K562 (cell line): ENCODE measurements at regions of chr1 and their contacts with region 1.

Region 1: GRCh38 chr1:174999216-174999925 is 376 bp upstream of the CACYBP start:
- DNase-seq: peak; percentile 95 to 99 (median 96)
- ATAC-seq: peak; percentile 77
- H3K4me3 ChIP-seq: peak overlapping the region; percentile 90
- H3K27ac ChIP-seq: peak overlapping the region; percentile 99
- H3K4me1 ChIP-seq: peaks cover 13 to 31% of the 10 kb centered on the region in 2 experiments; a peak in 4 of 5 replicates
- H3K27me3 ChIP-seq: no peaks in the 10 kb centered on the region
- CTCF ChIP-seq: 0 out of 6 replicates have a peak, but pooled peaks of 1 of the 3 experiments have one; percentile 15
- EP300 ChIP-seq: peak; percentile 71
- POLR2A ChIP-seq: peak; percentile 99
- RAD21 ChIP-seq: no peak

Region 2: DNA sequence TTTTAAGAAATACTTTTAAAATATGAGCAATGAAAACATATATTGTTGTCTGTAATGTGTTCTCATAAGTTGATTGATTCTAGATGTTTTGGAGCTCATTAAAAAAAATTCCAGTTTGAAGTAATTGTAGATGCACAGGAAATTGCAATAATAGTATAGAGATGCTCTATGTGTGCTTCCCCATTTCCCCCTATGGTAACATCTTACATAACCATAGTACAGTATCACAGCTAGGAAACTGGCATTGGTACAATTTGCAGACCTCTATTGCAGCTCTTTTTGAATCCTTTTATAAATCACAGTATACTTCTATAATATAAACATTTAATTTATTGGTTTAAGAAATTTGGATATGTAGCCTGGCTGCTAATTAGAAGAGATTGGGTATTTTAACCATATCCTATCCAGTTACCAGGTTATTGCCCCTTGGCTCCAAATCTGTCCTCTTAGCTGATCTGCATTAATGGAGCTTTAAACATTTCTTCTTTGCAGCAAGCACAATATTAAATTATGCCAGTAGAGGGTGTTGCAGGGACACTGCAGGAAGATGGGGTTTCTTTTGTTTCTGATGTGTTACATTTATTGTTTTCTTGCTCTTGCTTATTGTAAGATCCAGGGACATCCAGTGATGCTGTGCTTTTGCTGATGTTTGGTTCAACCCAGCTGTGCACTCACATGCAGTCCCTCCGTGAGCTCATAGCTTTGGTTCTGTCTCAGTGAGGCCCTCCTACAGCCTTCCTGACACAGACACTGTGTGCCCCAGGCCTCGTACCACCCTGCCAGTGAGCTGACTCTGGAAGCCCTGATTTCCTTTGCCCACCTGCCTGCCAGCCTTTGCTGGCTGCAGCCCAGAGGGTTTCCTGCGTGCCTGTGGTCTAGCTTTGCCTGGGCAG is 736.8 kb before region 1 on chr1:
- CTCF ChIA-PET with region 1: no interaction called
- POLR2A ChIA-PET with region 1: interaction called, 4 read pairs
- in situ Hi-C with region 1: loop called (anchors 25 kb)
- intact Hi-C with region 1: loop called (anchors 5 kb)
- DNase-seq: peak; percentile 37 to 50 (median 46)
- ATAC-seq: peak; percentile 84
- H3K4me3 ChIP-seq: no peak overlapping the region
- H3K27ac ChIP-seq: no peak overlapping the region
- H3K4me1 ChIP-seq: peaks cover 0 to 7% of the 10 kb centered on the region in 2 experiments; a peak in 2 of 5 replicates
- H3K27me3 ChIP-seq: no peaks in the 10 kb centered on the region
- CTCF ChIP-seq: peak; percentile 73 to 94 (median 77)
- EP300 ChIP-seq: no peak
- POLR2A ChIP-seq: no peak
- RAD21 ChIP-seq: peak; percentile 78 to 89

Region 3: GRCh38 chr1:174710868-174711845 is 288.2 kb before region 1 on chr1:
- CTCF ChIA-PET with region 1: no interaction called
- POLR2A ChIA-PET with region 1: no interaction called
- in situ Hi-C with region 1: no loop called
- intact Hi-C with region 1: no loop called
- DNase-seq: no peak
- ATAC-seq: no peak
- H3K4me3 ChIP-seq: no peak overlapping the region
- H3K27ac ChIP-seq: no peak overlapping the region
- H3K4me1 ChIP-seq: peaks cover 0 to 6% of the 10 kb centered on the region in 2 experiments; a peak in 1 of 5 replicates
- H3K27me3 ChIP-seq: no peaks in the 10 kb centered on the region
- CTCF ChIP-seq: no peak
- EP300 ChIP-seq: no peak
- POLR2A ChIP-seq: no peak
- RAD21 ChIP-seq: no peak

Region 4: DNA sequence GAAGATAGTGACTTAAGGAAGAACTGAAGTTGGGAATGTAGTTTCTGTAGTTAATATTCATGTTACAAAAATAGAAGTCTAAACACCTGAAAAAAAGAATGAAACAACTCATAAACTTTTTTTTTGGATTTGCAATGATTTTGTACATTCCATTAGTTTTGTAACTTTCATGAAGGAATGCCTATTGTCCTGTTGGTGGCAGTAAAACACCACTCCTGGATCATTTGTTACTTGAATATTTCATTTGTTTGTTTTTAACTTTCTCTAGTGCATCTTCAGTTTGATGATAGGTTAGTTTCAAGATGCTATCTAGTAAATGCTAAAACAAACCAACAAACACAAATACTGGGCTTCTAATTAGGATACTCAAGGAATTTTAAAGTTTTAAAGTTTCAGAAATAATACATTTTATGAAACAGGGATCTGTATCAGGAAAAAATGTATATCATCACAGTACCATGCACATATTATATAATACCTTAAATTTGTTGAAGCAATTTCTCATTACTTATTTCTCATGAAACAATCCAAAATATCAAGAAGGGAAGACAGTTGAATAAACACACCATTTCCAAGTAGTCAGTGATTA is 229.3 kb before region 1 on chr1:
- CTCF ChIA-PET with region 1: interaction called, 38 read pairs
- POLR2A ChIA-PET with region 1: interaction called, 5 read pairs
- in situ Hi-C with region 1: loop called (anchors 5 kb)
- intact Hi-C with region 1: loop called (anchors 1 kb)
- DNase-seq: peak; percentile 28 to 73 (median 38)
- ATAC-seq: peak; percentile 80
- H3K4me3 ChIP-seq: no peak overlapping the region
- H3K27ac ChIP-seq: no peak overlapping the region
- H3K4me1 ChIP-seq: peaks cover 0 to 10% of the 10 kb centered on the region in 2 experiments; a peak in 2 of 5 replicates
- H3K27me3 ChIP-seq: no peaks in the 10 kb centered on the region
- CTCF ChIP-seq: peak; percentile 59 to 93 (median 63); a peak in 4 of 6 replicates
- EP300 ChIP-seq: no peak
- POLR2A ChIP-seq: no peak
- RAD21 ChIP-seq: peak; percentile 93 to 95

Region 5: GRCh38 chr1:174883409-174883808 is 116.0 kb before region 1 on chr1:
- CTCF ChIA-PET with region 1: no interaction called
- POLR2A ChIA-PET with region 1: interaction called, 11 read pairs
- in situ Hi-C with region 1: no loop called
- intact Hi-C with region 1: loop called (anchors 1 kb)
- DNase-seq: peak in 2 of 4 experiments; percentile 32 to 52
- ATAC-seq: peak; percentile 81
- H3K4me3 ChIP-seq: no peak overlapping the region
- H3K27ac ChIP-seq: no peak overlapping the region
- H3K4me1 ChIP-seq: peaks cover 6 to 13% of the 10 kb centered on the region in 2 experiments; a peak in 3 of 5 replicates
- H3K27me3 ChIP-seq: no peaks in the 10 kb centered on the region
- CTCF ChIP-seq: peak; percentile 34 to 66 (median 36); a peak in 3 of 6 replicates
- EP300 ChIP-seq: no peak
- POLR2A ChIP-seq: no peak
- RAD21 ChIP-seq: peak; percentile 63 to 75

Region 6: DNA sequence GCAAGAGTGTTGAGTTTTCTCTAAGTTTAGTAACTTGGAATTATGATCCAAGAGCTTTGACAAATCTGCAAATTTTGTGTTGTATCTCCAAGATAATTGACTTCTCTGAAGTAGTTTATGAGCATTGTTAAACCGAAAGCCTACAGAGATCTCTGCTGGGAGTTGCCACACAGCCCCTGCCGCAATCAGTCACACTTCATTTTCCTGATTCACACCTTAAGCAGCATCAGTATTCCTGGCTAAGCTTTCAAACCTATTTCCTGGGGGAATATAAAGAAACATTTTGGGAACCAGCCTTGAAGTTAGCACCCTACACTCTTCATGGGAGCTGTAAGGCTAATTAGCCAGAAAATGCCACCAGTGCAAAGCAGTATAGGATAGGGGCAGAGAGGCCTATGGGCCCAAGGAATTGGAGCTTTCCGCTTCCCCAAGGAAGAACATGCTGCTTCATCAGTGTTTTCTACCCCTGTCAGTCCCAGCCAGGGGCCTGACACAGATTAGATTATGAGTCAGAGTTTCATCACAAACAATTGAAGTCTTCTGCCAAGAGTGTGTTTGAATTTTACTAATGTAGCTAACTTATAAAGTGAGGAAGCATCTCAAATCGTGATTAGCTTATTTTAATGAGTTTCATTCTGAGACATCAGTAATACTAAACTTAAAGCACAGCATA is 22.8 kb before region 1 on chr1:
- CTCF ChIA-PET with region 1: no interaction called
- POLR2A ChIA-PET with region 1: interaction called, 60 read pairs
- in situ Hi-C with region 1: no loop called
- intact Hi-C with region 1: no loop called
- DNase-seq: peak in 2 of 4 experiments; percentile 51 to 62
- ATAC-seq: peak; percentile 80
- H3K4me3 ChIP-seq: no peak overlapping the region
- H3K27ac ChIP-seq: peak overlapping the region; percentile 2; the same call in 1 of the 3 replicates
- H3K4me1 ChIP-seq: peaks cover 0 to 19% of the 10 kb centered on the region in 2 experiments; a peak in 4 of 5 replicates
- H3K27me3 ChIP-seq: no peaks in the 10 kb centered on the region
- CTCF ChIP-seq: no peak
- EP300 ChIP-seq: no peak
- POLR2A ChIP-seq: no peak
- RAD21 ChIP-seq: no peak; a peak in 1 of 4 replicates

Region 7: GRCh38 chr1:175015243-175015642 is 15.9 kb after region 1 on chr1:
- CTCF ChIA-PET with region 1: no interaction called
- POLR2A ChIA-PET with region 1: interaction called, 33 read pairs
- in situ Hi-C with region 1: no loop called
- intact Hi-C with region 1: no loop called
- DNase-seq: no peak
- ATAC-seq: no peak
- H3K4me3 ChIP-seq: no peak overlapping the region
- H3K27ac ChIP-seq: no peak overlapping the region
- H3K4me1 ChIP-seq: peaks cover 3 to 7% of the 10 kb centered on the region in 2 experiments; a peak in 3 of 5 replicates
- H3K27me3 ChIP-seq: no peaks in the 10 kb centered on the region
- CTCF ChIP-seq: no peak
- EP300 ChIP-seq: no peak
- POLR2A ChIP-seq: no peak
- RAD21 ChIP-seq: no peak

Region 8: GRCh38 chr1:175095978-175096607 is 96.7 kb after region 1 on chr1:
- CTCF ChIA-PET with region 1: no interaction called
- POLR2A ChIA-PET with region 1: no interaction called
- in situ Hi-C with region 1: no loop called
- intact Hi-C with region 1: no loop called
- DNase-seq: peak in 1 of 4 experiments; percentile 14
- ATAC-seq: peak; percentile 57
- H3K4me3 ChIP-seq: no peak overlapping the region
- H3K27ac ChIP-seq: no peak overlapping the region; the same call in 2 of the 3 replicates
- H3K4me1 ChIP-seq: no peaks in the 10 kb centered on the region; a peak in 1 of 5 replicates
- H3K27me3 ChIP-seq: peaks cover 9 to 24% of the 10 kb centered on the region in 2 experiments
- CTCF ChIP-seq: no peak
- EP300 ChIP-seq: no peak
- POLR2A ChIP-seq: no peak
- RAD21 ChIP-seq: no peak